Dendritic cell treated with granulocyte-macrophage colony-stimulating factor and Interleukin-4, amounts not matched to agents 40 ng/mL and 50 ng/mL, for 4 days (primary cell): ENCODE measurements at regions of chr1 and their contacts with region 1.

Region 1: DNA sequence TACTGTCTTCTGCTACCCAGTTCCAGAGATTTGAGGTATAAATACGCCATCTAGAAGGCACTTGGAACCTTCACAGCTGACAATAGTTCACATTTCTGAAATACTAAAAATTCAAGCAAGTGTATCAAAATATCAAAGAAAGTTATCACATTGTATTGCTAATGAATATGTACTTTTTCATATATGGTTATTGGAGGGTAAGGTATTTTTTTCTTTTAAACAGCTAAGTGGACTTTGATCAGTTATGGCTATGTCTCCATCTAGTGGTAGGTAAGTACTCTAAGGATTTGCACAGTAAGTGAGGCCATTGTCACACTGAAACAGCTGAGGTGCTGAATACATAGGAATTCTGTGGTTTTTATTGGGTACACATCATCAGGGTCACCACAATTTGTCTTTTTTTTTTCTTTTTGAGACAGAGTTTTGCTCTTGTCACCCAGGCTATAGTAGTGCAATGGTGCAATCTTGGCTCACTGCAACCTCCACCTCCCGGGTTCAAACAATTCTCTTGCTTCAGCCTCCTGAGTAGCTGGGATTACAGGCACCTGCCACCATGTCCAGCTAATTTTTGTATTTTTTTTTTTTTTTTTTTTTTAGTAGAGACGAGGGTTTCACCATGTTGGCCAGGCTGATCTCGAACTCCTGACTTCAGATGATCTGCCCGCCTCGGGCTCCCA is 49.1 kb upstream of the CR2 start:
- H3K4me3 Mint-ChIP-seq: no peak overlapping the region
- H3K27ac Mint-ChIP-seq: no peak overlapping the region
- H3K4me1 Mint-ChIP-seq: peaks cover 26% of the 10 kb centered on the region
- H3K27me3 Mint-ChIP-seq: no peaks in the 10 kb centered on the region

Region 2: DNA sequence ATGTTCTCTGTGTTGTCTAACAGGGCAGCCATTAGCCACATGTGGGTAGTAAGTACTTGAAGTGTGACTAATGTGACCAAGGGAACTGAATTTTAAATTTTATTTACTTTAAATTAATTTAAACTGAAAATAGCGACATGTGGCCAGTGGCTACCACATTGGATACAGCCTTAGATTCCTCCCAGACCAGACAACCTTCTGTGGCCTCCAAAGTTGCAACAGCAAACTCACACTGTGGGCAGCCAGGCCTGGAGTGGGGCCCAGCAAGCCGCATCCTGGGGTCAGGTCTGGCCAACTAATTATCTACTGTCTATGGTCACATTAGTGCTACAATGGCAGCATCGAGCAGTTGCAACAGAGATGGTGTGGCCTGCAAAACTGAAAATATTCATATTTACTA is 804.5 kb before region 1 on chr1:
- intact Hi-C with region 1: no loop called
- H3K4me3 Mint-ChIP-seq: no peak overlapping the region
- H3K27ac Mint-ChIP-seq: no peak overlapping the region
- H3K4me1 Mint-ChIP-seq: no peaks in the 10 kb centered on the region
- H3K27me3 Mint-ChIP-seq: no peaks in the 10 kb centered on the region

Region 3: GRCh38 chr1:207084701-207085180 is 320.2 kb before region 1 on chr1:
- intact Hi-C with region 1: loop called (anchors 1 kb)
- H3K4me3 Mint-ChIP-seq: no peak overlapping the region
- H3K27ac Mint-ChIP-seq: peak overlapping the region; percentile 15
- H3K4me1 Mint-ChIP-seq: peaks cover 24% of the 10 kb centered on the region
- H3K27me3 Mint-ChIP-seq: peaks cover 10% of the 10 kb centered on the region

Region 4: GRCh38 chr1:207389740-207390464 is 15.1 kb before region 1 on chr1:
- intact Hi-C with region 1: no loop called
- H3K4me3 Mint-ChIP-seq: no peak overlapping the region
- H3K27ac Mint-ChIP-seq: no peak overlapping the region
- H3K4me1 Mint-ChIP-seq: no peaks in the 10 kb centered on the region
- H3K27me3 Mint-ChIP-seq: no peaks in the 10 kb centered on the region

Region 5: DNA sequence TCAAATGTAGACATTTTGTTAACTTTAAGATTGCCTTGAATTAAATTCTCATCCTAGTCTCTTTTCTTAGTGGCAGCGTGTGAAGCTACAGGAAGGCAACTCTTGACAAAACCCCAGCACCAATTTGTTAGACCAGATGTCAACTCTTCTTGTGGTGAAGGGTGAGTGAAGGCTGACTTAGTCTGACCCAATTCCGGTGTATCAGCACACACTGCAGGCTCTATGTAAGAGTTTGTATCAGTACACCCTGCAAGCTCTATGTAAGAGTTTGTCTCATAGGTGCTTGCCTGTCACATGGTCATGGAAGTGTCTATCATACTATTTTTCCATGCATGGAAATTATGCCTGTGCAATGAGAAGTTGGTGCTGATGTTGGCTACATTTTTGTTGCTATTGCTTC is 65.9 kb after region 1 on chr1:
- intact Hi-C with region 1: no loop called
- H3K4me3 Mint-ChIP-seq: no peak overlapping the region
- H3K27ac Mint-ChIP-seq: no peak overlapping the region
- H3K4me1 Mint-ChIP-seq: no peaks in the 10 kb centered on the region
- H3K27me3 Mint-ChIP-seq: peaks cover 6% of the 10 kb centered on the region